Common myeloid progenitor, CD34-positive (primary cell): ENCODE measurements at regions of chr7 and their contacts with region 1.

Region 1: GRCh38 chr7:101542527-101543241 is 86.4 kb downstream of the MYL10 start:
- DNase-seq: peak; percentile 56 to 76 (median 60)
- H3K4me3 ChIP-seq: no peak overlapping the region
- H3K27ac ChIP-seq: no peak overlapping the region
- H3K4me1 ChIP-seq: peaks cover 0 to 8% (median 3%) of the 10 kb centered on the region in 4 experiments
- H3K27me3 ChIP-seq: no peaks in the 10 kb centered on the region

Region 2: GRCh38 chr7:101527844-101528667 is 14.6 kb before region 1 on chr7:
- CTCF ChIA-PET with region 1: interaction called, 11 read pairs
- POLR2A ChIA-PET with region 1: no interaction called
- DNase-seq: no peak
- H3K4me3 ChIP-seq: no peak overlapping the region
- H3K27ac ChIP-seq: no peak overlapping the region
- H3K4me1 ChIP-seq: peaks cover 0 to 11% (median 3%) of the 10 kb centered on the region in 4 experiments
- H3K27me3 ChIP-seq: no peaks in the 10 kb centered on the region

Region 3: DNA sequence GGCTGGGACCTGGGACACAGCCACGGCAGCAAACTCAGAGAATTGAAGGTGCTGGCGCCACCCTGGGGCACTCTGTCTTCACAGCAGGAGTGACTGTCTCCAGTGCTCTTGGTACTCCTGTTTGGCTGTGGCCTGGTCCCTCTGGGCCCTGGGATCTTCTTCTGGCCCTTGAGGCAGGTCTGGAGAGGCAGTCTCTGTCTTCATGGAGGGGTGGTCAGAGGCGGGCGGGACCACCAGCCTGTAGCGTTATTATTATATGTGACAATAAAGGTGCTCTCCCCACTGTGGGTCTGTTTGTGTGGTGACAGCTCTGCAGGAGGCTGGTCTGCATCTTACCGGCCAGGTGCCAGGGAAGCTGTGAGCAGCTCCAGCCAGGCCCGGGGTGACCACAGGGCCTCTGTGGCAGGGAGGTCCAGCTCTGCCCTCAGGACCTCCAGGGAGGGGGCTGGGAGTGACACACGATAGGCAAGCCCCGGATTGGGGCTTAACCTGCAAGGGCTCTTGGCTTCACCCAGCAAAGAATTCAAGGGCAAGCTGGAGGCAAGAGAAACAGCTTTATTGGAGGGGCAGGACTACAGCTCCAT is 16.1 kb after region 1 on chr7:
- CTCF ChIA-PET with region 1: interaction called, 11 read pairs
- POLR2A ChIA-PET with region 1: no interaction called
- DNase-seq: no peak
- H3K4me3 ChIP-seq: no peak overlapping the region
- H3K27ac ChIP-seq: no peak overlapping the region
- H3K4me1 ChIP-seq: peaks cover 0 to 12% (median 6%) of the 10 kb centered on the region in 4 experiments
- H3K27me3 ChIP-seq: no peaks in the 10 kb centered on the region

Region 4: DNA sequence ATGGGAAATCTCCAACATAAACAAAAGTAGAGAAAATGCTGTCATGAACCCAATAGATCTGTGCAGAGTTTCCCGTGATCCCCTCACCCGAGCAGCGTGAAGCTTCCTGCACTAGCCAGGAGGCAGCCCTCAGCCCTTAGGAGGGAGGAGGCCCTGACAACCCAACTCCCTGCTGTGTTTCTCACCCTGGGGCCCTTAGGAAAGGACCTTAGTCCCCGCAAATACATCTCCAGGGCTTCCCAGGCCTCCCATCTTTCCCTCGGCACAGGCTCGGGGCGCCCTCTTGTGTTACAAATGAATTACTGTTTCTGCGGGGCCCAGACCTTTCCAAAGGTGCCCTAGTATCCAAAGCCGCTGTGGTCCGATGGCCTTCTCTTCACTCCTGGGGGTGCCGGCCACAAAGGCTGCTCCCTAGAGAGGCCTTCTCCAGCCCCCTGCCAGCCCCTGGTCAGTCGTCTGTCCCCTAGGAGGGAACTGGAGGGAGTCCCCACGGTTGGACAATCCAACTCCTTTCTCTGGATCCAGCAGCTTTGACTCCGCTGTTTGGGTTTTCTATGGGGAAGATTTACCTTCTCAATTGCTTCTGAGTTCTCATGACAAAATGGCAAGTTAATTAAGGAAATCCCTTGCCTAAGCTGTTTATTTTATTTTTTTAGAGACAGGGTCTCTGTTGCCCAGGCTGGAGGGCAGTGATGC is 694.1 kb after region 1 on chr7:
- CTCF ChIA-PET with region 1: interaction called, 11 read pairs
- POLR2A ChIA-PET with region 1: no interaction called
- DNase-seq: peak; percentile 42 to 63 (median 60)
- H3K4me3 ChIP-seq: no peak overlapping the region
- H3K27ac ChIP-seq: no peak overlapping the region
- H3K4me1 ChIP-seq: no peaks in the 10 kb centered on the region
- H3K27me3 ChIP-seq: no peaks in the 10 kb centered on the region

Region 5: GRCh38 chr7:102272075-102272917 is 729.6 kb after region 1 on chr7:
- CTCF ChIA-PET with region 1: interaction called, 61 read pairs
- POLR2A ChIA-PET with region 1: no interaction called
- DNase-seq: peak; percentile 46 to 63 (median 54)
- H3K4me3 ChIP-seq: no peak overlapping the region
- H3K27ac ChIP-seq: no peak overlapping the region
- H3K4me1 ChIP-seq: peaks cover 0 to 2% (median 0%) of the 10 kb centered on the region in 4 experiments
- H3K27me3 ChIP-seq: no peaks in the 10 kb centered on the region